Activated B cell treated with CpG ODN at 0.5 μM for 24 hours (primary cell): ENCODE measurements at regions of chr5 and their contacts with region 1.

Region 1: GRCh38 chr5:18699681-18700080 is 1065.4 kb downstream of the TAF11L14 start:
- DNase-seq: no peak
- ATAC-seq: no peak
- H3K4me3 Mint-ChIP-seq: no peak overlapping the region
- H3K27ac Mint-ChIP-seq: no peak overlapping the region
- H3K4me1 Mint-ChIP-seq: peaks cover 31% of the 10 kb centered on the region
- H3K27me3 Mint-ChIP-seq: no peaks in the 10 kb centered on the region
- CTCF ChIP-seq: no peak

Region 2: GRCh38 chr5:17276445-17276844 is 1423.2 kb before region 1 on chr5:
- CTCF ChIA-PET with region 1: no interaction called
- POLR2A ChIA-PET with region 1: no interaction called
- intact Hi-C with region 1: loop called (anchors 5 kb)
- DNase-seq: no peak
- ATAC-seq: no peak
- H3K4me3 Mint-ChIP-seq: peak overlapping the region; percentile 55
- H3K27ac Mint-ChIP-seq: peak overlapping the region; percentile 94
- H3K4me1 Mint-ChIP-seq: peaks cover 87% of the 10 kb centered on the region
- H3K27me3 Mint-ChIP-seq: no peaks in the 10 kb centered on the region
- CTCF ChIP-seq: no peak

Region 3: DNA sequence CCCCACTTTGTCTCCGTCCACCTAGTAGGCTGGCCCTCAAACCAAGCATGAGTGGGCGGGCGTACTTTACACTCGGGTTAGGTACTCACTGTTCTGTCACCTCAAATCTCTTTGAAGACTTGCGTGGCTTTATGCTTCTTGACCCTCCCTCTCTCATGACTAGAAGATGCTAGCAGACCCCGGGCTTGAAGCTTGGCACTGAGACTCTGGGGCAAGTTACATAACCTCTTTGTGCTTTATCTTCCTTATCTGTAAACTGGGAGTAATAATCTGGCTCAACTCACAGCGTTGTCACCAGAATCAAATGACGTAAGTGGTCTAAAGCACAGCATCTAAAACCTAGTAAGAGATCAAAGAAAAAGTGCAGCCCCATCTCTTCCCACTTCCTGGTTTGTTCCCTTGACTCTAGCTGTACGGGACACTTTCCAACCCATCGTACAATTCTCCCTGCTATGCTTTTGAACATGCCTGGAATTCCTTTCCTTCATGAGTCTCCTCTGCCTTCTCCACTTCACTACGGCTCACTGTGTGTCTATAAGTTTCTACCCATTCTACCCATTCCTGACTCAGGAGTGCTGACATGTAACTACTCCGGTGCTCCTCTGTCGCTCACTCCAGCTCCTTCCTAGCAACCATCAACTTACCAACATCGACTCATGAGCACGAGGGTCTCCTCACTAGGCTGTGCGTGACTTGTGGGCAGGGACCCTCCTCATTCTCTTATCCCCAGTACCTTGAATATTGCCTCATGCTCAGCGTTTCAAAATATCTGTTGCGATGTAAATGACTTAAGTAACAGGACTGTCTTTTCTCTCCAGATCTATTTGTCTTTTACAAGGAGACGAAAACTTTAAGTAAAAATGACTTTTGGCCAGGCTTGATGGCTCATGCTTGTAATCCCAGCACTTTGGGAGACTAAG is 1409.4 kb before region 1 on chr5:
- CTCF ChIA-PET with region 1: no interaction called
- POLR2A ChIA-PET with region 1: no interaction called
- intact Hi-C with region 1: no loop called
- DNase-seq: no peak
- ATAC-seq: no peak
- H3K4me3 Mint-ChIP-seq: no peak overlapping the region
- H3K27ac Mint-ChIP-seq: no peak overlapping the region
- H3K4me1 Mint-ChIP-seq: peaks cover 6% of the 10 kb centered on the region
- H3K27me3 Mint-ChIP-seq: no peaks in the 10 kb centered on the region
- CTCF ChIP-seq: no peak

Region 4: GRCh38 chr5:18393589-18394442 is 305.9 kb before region 1 on chr5:
- CTCF ChIA-PET with region 1: interaction called, 3 read pairs
- POLR2A ChIA-PET with region 1: no interaction called
- intact Hi-C with region 1: loop called (anchors 1 kb)
- DNase-seq: peak; percentile 38
- ATAC-seq: peak; percentile 56
- H3K4me3 Mint-ChIP-seq: no peak overlapping the region
- H3K27ac Mint-ChIP-seq: no peak overlapping the region
- H3K4me1 Mint-ChIP-seq: no peaks in the 10 kb centered on the region
- H3K27me3 Mint-ChIP-seq: no peaks in the 10 kb centered on the region
- CTCF ChIP-seq: peak; percentile 66

Region 5: DNA sequence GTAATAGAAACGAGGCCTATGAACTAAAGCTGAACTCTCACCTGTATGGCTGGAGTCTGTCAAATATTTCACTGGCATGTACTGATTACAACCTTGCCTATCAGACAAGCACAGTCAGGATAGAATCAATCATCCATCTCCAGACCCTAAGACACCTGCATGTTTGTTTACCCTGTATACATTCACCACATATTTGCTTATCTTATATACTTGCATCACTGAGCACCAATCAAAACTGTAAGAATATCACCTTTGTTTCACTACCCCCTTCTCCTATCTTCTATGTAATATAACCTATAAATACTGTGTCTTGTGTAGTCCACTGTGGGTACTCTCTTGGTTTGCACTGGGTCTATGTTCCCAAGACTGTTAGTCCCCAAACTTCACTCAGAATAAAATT is 20.3 kb after region 1 on chr5:
- CTCF ChIA-PET with region 1: interaction called, 5 read pairs
- POLR2A ChIA-PET with region 1: interaction called, 3 read pairs
- intact Hi-C with region 1: loop called (anchors 2 kb)
- DNase-seq: no peak
- ATAC-seq: no peak
- H3K4me3 Mint-ChIP-seq: no peak overlapping the region
- H3K27ac Mint-ChIP-seq: no peak overlapping the region
- H3K4me1 Mint-ChIP-seq: peaks cover 21% of the 10 kb centered on the region
- H3K27me3 Mint-ChIP-seq: no peaks in the 10 kb centered on the region
- CTCF ChIP-seq: no peak